Posterior vena cava (tissue), 2 donors: ENCODE measurements at regions of chr1 and their contacts with region 1.

Region 1: GRCh38 chr1:64082459-64082858 is 121.0 kb upstream of the UBE2U start:
- DNase-seq: no peak

Region 2: DNA sequence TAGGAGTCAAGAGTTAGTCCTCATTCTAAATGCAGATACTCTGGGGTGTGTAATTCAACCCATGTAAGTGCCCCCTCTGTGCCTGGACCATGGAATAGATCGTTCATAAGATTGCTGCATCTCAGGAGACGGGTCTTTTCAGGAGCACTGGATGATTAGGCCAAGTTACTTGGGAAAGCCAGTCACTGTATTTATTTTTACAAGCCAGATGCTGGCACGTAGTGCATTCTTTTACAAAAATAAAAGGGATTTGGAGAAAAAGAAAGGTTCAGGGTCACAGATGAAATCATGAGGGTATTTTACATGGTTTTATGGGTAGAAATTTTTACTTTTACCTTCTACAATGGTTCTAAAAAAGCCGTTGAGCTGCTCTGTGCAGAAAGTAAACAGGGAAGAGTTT is 18.3 kb after region 1 on chr1:
- intact Hi-C with region 1: loop called in 1 of 2 experiments (anchors 1 kb)
- DNase-seq: no peak